ENCODE measurements at regions of chr3 and their contacts with region 1.

Region 1: DNA sequence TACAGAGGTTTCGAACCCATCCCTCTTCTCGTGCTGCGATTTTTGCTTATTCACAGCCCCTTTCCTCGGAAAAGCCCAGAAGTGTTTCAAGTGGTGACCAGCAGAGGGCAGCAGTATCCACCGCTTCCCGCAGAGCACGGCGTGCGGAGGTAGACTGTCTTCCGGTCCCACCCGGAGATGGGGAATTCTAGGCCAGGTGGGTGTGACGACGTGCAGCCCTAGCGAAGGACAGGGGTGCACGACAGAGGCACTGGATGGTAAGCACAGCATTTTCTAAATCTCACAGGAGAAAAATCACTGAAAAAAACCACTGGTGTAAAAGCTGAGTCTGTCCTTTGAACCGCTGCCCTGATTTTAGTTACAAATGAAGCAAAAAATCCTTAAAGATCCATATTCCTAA is 7.4 kb upstream of the PSMD6 start:
- DNase-seq: peak; percentile 77 to 92
- H3K4me3 ChIP-seq: peak overlapping the region; percentile 18 to 37 (median 28)
- H3K27ac ChIP-seq: no peak overlapping the region
- H3K4me1 ChIP-seq: peaks cover 0 to 14% (median 8%) of the 10 kb centered on the region in 4 donors
- H3K27me3 ChIP-seq: peaks cover 0 to 25% (median 3%) of the 10 kb centered on the region in 3 donors
- CTCF ChIP-seq: peak in 6 of 7 experiments; percentile 30 to 90 (median 87)
- EP300 ChIP-seq: no peak
- POLR2A ChIP-seq: no peak

Region 2: GRCh38 chr3:64163755-64164148 is 133.0 kb after region 1 on chr3:
- intact Hi-C with region 1: no loop called
- DNase-seq: peak in 1 of 2 donors; percentile 38
- H3K4me3 ChIP-seq: no peak overlapping the region
- H3K27ac ChIP-seq: no peak overlapping the region
- H3K4me1 ChIP-seq: peaks cover 0 to 62% (median 40%) of the 10 kb centered on the region in 4 donors
- H3K27me3 ChIP-seq: no peaks in the 10 kb centered on the region
- CTCF ChIP-seq: no peak
- EP300 ChIP-seq: no peak
- POLR2A ChIP-seq: no peak

Region 3: GRCh38 chr3:64399205-64399800 is 368.6 kb after region 1 on chr3:
- intact Hi-C with region 1: loop called (anchors 5 kb)
- DNase-seq: peak in 1 of 2 donors; percentile 84
- H3K4me3 ChIP-seq: no peak overlapping the region
- H3K27ac ChIP-seq: no peak overlapping the region
- H3K4me1 ChIP-seq: peaks cover 0 to 8% (median 3%) of the 10 kb centered on the region in 4 donors
- H3K27me3 ChIP-seq: no peaks in the 10 kb centered on the region
- CTCF ChIP-seq: peak in 5 of 7 experiments; percentile 42 to 79 (median 61)
- EP300 ChIP-seq: no peak
- POLR2A ChIP-seq: no peak

Region 4: GRCh38 chr3:64484289-64484992 is 453.7 kb after region 1 on chr3:
- intact Hi-C with region 1: loop called (anchors 5 kb)
- DNase-seq: peak; percentile 84 to 93
- H3K4me3 ChIP-seq: no peak overlapping the region
- H3K27ac ChIP-seq: no peak overlapping the region
- H3K4me1 ChIP-seq: peaks cover 6 to 12% (median 7%) of the 10 kb centered on the region in 4 donors
- H3K27me3 ChIP-seq: peaks cover 0 to 16% (median 0%) of the 10 kb centered on the region in 3 donors
- CTCF ChIP-seq: peak in 5 of 7 experiments; percentile 64 to 92 (median 82)
- EP300 ChIP-seq: no peak
- POLR2A ChIP-seq: no peak

Measured in stomach (tissue), 19 donors.